ENCODE measurements at regions of chr7 and their contacts with region 1.

Region 1: DNA sequence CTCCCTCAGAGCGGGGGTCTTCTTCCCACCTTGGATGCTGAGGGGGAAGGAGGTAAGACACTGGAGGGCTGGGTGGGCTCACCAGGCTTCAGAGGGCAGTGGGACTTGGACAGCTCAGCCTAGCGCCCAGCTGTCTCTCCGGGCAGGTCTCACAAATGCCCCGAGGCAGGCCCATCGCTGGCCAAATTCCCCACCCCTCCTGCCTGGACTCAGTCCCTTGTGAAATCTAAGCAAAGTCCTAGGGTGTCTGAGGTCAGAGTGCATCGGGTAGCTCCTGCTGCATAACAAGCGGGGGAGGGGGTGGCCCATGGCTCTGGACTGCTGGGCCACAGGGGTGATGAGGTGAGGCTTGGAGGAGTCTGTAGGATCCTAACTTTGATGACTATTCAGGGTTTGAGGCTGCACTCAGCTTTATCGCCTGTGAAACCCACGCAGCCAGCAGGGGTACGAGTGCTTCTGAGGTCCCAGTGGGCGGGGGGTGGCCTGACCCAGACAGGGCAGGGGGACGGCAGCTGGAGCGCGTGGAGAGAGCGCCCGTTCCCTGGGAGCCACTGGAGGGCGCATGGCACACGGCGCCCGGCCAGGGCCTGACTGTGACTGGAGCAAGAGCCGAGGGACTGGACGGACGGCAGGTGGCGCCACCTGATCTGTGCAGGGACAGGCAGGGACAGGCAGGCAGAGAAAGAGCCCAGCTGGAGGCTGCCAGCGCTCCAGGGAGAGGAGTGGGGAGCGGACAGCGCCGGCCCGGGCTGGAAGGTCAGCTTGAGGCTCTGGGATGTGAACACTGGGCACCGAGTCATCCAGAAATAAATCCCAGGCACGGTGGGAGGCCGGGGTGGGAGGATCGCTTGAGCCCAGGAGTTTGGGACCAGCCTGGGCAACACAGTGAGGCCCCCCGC is 10.0 kb downstream of the CYP2W1 start:
- DNase-seq: peak; percentile 93
- ATAC-seq: peak; percentile 82
- H3K4me3 ChIP-seq: peak overlapping the region; percentile 54 to 74 (median 61); a peak in 5 of 6 replicates
- H3K27ac ChIP-seq: peak overlapping the region; percentile 91
- H3K4me1 ChIP-seq: peaks cover 35% of the 10 kb centered on the region
- H3K27me3 ChIP-seq: no peaks in the 10 kb centered on the region
- CTCF ChIP-seq: peak; percentile 100
- EP300 ChIP-seq: peak in 1 of 2 experiments; percentile 60; a peak in 2 of 4 replicates
- POLR2A ChIP-seq: peak in 1 of 2 experiments; percentile 53; a peak in 2 of 4 replicates
- RAD21 ChIP-seq: peak; percentile 100

Region 2: DNA sequence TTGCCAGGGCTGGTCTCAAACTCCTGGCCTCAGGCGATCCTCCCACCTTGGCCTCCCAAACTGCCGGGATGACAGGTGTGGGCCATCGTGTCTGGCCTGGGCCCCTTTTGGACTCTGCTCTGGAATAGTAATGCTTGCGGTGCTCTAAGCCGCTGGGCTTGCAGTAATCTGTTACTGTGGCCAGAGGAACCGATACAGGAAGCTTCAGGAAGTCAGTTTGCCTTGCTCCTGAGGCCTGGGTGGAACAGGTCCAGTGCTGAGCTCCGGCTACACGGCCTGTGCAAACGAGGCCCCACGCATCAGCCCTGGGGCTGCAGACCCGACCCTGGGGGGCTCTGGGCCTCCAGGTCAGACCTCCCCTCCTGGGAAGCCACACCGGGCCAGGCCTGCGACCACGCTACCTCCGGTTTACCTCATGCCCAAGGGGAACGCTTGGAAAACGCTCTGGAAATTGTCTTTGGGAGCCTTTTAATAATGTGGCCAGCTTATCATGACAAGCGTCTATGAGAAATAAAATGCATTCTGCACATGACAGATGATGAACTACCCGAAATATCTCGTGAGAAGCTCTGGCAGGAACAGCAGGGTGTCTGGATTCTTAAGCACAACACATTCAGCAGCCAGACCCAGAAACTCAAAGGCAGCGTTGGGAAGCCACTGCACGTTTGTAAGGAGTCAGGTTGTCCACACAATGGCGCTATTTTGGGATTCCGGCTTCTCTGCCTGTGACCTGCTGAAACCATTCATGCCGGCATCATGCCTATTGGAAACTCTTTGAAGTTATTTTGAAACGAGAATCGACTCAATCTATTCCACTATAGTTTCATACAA is 28.3 kb before region 1 on chr7:
- CTCF ChIA-PET with region 1: interaction called, 14 read pairs
- POLR2A ChIA-PET with region 1: interaction called, 29 read pairs
- in situ Hi-C with region 1: no loop called
- intact Hi-C with region 1: no loop called
- DNase-seq: peak; percentile 64
- ATAC-seq: peak; percentile 48
- H3K4me3 ChIP-seq: peak overlapping the region in 1 of 3 experiments; percentile 72; a peak in 2 of 6 replicates
- H3K27ac ChIP-seq: peak overlapping the region; percentile 59
- H3K4me1 ChIP-seq: peaks cover 55% of the 10 kb centered on the region
- H3K27me3 ChIP-seq: no peaks in the 10 kb centered on the region
- CTCF ChIP-seq: peak; percentile 58
- EP300 ChIP-seq: no peak
- POLR2A ChIP-seq: peak in 1 of 2 experiments; percentile 64; a peak in 2 of 4 replicates
- RAD21 ChIP-seq: no peak

Region 3: DNA sequence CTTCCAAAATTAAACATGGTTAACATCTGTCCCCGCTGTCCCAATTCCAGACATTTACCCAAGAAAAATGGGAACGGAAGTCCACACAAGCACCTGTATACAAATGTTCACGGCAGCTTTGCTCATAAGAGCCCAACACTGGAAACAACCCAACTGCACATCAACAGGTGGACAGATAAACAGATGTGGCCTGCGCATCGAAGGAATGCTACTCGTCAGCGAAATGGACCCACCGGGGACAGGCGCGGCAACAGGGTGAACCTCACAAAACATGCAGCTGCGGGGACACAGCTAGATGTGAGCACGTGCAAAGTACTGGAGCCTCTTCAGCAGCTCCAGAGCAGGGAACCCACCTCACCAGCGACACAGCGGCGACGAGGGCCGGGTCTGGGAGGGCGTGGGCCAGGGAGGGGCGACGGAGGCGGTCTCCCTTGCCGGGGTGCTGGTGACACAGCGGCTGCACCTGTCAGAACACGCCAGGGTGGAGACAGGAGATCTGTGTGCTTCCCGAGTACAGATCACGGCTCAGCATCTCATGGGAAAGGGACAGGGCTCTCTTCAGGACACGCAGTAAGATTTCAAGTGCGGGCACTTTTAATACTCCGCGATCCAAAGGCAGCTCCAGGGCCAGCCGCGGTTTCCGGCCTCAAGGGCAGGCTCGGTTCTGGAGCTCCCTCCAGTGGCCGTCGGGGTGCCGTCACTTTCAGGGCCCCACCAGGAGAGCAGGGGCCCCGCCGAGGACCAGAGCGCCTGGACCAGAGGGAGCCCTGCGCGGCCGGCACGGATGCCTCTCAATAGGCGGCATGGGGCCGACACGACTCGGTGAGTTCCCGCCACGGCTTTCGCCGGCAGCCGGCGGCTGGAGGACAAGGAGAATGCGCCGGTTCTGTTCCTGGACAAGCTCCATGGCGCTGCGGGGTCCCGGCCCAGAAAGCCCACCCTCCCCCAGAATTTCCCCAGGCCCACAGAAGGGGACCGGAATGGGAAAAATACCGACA is 72.6 kb after region 1 on chr7:
- CTCF ChIA-PET with region 1: interaction called, 65 read pairs
- POLR2A ChIA-PET with region 1: interaction called, 45 read pairs
- in situ Hi-C with region 1: loop called (anchors 5 kb)
- intact Hi-C with region 1: loop called (anchors 1 kb)
- DNase-seq: peak; percentile 46
- ATAC-seq: peak; percentile 94
- H3K4me3 ChIP-seq: no peak overlapping the region
- H3K27ac ChIP-seq: no peak overlapping the region
- H3K4me1 ChIP-seq: peaks cover 34% of the 10 kb centered on the region
- H3K27me3 ChIP-seq: no peaks in the 10 kb centered on the region
- CTCF ChIP-seq: peak; percentile 97
- EP300 ChIP-seq: no peak
- POLR2A ChIP-seq: no peak
- RAD21 ChIP-seq: peak; percentile 98

Region 4: DNA sequence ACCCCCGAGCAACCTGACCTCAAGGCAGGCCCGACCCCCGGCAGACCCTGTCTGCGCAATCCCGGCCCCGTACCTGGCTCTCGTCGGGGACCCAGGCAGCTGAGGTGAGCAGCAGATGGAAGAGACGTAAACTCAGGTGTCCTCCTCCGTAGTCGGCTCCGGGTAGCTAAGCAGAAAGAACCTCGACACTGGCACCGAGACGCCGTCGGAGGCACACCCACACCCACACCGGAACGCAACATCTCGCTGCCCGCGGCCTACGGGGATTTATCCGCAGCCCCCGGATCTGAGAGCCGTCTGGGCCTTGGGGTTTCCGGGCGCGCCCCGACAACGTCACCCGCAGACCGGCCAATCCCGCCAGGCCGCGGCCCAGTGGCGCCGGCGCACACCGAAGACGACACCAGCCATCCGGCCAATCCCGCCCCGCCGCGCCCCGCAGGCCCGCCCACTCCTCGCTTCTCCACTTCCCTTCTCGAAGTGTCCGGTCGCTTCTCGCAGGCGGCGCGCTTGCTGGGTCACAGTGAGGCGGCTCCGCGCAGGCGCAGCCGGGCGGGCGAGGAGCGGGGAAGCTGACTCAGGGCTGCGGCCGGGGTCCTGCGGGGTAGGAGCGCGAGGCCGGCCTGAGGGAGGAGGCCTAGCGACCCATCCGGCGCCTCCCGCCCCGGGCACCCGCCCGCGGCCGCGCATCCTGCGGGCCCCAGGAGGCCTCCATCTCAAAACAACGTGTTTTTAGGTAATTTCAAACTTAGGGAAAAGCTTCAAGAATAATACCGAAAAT is 167.1 kb after region 1 on chr7 and contains the start of gene ZFAND2A:
- CTCF ChIA-PET with region 1: no interaction called
- POLR2A ChIA-PET with region 1: interaction called, 21 read pairs
- in situ Hi-C with region 1: no loop called
- intact Hi-C with region 1: no loop called
- DNase-seq: peak; percentile 92
- ATAC-seq: peak; percentile 71
- H3K4me3 ChIP-seq: peak within 1 kb of the TSS; percentile 73 to 100 (median 97)
- H3K27ac ChIP-seq: peak within 1 kb of the TSS; percentile 92
- H3K4me1 ChIP-seq: peaks cover 44% of the 10 kb centered on the region
- H3K27me3 ChIP-seq: no peaks in the 10 kb centered on the region; a peak in 1 of 5 replicates
- CTCF ChIP-seq: no peak
- EP300 ChIP-seq: peak in 1 of 2 experiments; percentile 12; a peak in 1 of 4 replicates
- POLR2A ChIP-seq: peak; percentile 66 to 75
- RAD21 ChIP-seq: no peak; the same call in 1 of the 2 replicates
- total RNA-seq, gene ZFAND2A: 140 and 171 TPM in 2 replicates

Region 5: GRCh38 chr7:1175967-1176851 is 183.3 kb after region 1 on chr7:
- CTCF ChIA-PET with region 1: interaction called, 5 read pairs
- POLR2A ChIA-PET with region 1: interaction called, 16 read pairs
- in situ Hi-C with region 1: loop called (anchors 5 kb)
- intact Hi-C with region 1: no loop called
- DNase-seq: peak; percentile 70
- ATAC-seq: peak; percentile 83
- H3K4me3 ChIP-seq: peak overlapping the region; percentile 27 to 65 (median 37); a peak in 5 of 6 replicates
- H3K27ac ChIP-seq: peak overlapping the region; percentile 57
- H3K4me1 ChIP-seq: peaks cover 26% of the 10 kb centered on the region
- H3K27me3 ChIP-seq: peaks cover 3 to 9% of the 10 kb centered on the region in 2 experiments; a peak in 2 of 5 replicates
- CTCF ChIP-seq: peak; percentile 98
- EP300 ChIP-seq: no peak
- POLR2A ChIP-seq: peak in 1 of 2 experiments; percentile 53; a peak in 2 of 4 replicates
- RAD21 ChIP-seq: peak; percentile 83

Region 6: GRCh38 chr7:1287752-1288201 is 294.8 kb after region 1 on chr7:
- CTCF ChIA-PET with region 1: no interaction called
- POLR2A ChIA-PET with region 1: no interaction called
- in situ Hi-C with region 1: no loop called
- intact Hi-C with region 1: no loop called
- DNase-seq: no peak
- ATAC-seq: 0 out of 3 replicates have a peak, but pooled peaks have one; percentile 18
- H3K4me3 ChIP-seq: no peak overlapping the region
- H3K27ac ChIP-seq: no peak overlapping the region
- H3K4me1 ChIP-seq: no peaks in the 10 kb centered on the region
- H3K27me3 ChIP-seq: peaks cover 22 to 87% of the 10 kb centered on the region in 2 experiments
- CTCF ChIP-seq: no peak
- EP300 ChIP-seq: no peak
- POLR2A ChIP-seq: no peak
- RAD21 ChIP-seq: no peak

Measured in HepG2 (cell line).